ENCODE measurements at regions of chr6 and their contacts with region 1.

Region 1: DNA sequence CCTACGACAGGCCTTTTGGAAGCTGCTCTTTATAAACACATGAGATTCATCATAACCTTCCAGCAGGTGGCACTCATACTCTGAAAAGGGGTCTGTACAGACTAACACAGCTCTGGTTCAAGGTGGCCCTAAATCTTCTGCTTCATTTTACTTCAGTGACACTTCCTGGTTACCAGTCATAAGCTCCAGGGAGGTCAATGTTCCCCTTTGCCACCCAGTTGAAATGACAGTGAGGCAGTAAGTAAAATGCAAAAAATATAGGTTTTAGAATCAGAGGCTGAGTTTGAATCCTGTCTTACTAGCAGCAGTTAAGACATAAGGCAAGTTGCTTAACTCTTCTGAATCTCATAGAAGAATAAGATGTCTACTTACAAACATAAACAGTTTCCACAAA is 132.8 kb downstream of the CDK19 start:
- DNase-seq: peak in 32 of 35 experiments; percentile 21 to 88 (median 60)
- ATAC-seq: peak; percentile 91 to 100 (median 98)
- H3K4me3 ChIP-seq: no peak overlapping the region
- H3K4me3 Mint-ChIP-seq: no peak overlapping the region
- H3K27ac ChIP-seq: no peak overlapping the region
- H3K27ac Mint-ChIP-seq: no peak overlapping the region
- H3K4me1 ChIP-seq: peaks cover 5 to 8% of the 10 kb centered on the region in 2 experiments
- H3K4me1 Mint-ChIP-seq: peaks cover 12 to 22% (median 13%) of the 10 kb centered on the region in 3 donors
- H3K27me3 ChIP-seq: no peaks in the 10 kb centered on the region
- H3K27me3 Mint-ChIP-seq: no peaks in the 10 kb centered on the region

Region 2: GRCh38 chr6:110595112-110595511 is 87.3 kb before region 1 on chr6:
- CTCF ChIA-PET with region 1: no interaction called
- POLR2A ChIA-PET with region 1: no interaction called
- DNase-seq: no peak
- ATAC-seq: no peak
- H3K4me3 ChIP-seq: no peak overlapping the region
- H3K4me3 Mint-ChIP-seq: no peak overlapping the region
- H3K27ac ChIP-seq: no peak overlapping the region
- H3K27ac Mint-ChIP-seq: no peak overlapping the region
- H3K4me1 ChIP-seq: no peaks in the 10 kb centered on the region
- H3K4me1 Mint-ChIP-seq: peaks cover 0 to 4% (median 0%) of the 10 kb centered on the region in 3 donors
- H3K27me3 ChIP-seq: no peaks in the 10 kb centered on the region
- H3K27me3 Mint-ChIP-seq: no peaks in the 10 kb centered on the region

Region 3: GRCh38 chr6:110654096-110654820 is 28.2 kb before region 1 on chr6:
- CTCF ChIA-PET with region 1: no interaction called
- POLR2A ChIA-PET with region 1: no interaction called
- DNase-seq: no peak
- ATAC-seq: no peak
- H3K4me3 ChIP-seq: no peak overlapping the region
- H3K4me3 Mint-ChIP-seq: no peak overlapping the region
- H3K27ac ChIP-seq: no peak overlapping the region
- H3K27ac Mint-ChIP-seq: no peak overlapping the region
- H3K4me1 ChIP-seq: no peaks in the 10 kb centered on the region
- H3K4me1 Mint-ChIP-seq: peaks cover 3 to 10% (median 8%) of the 10 kb centered on the region in 3 donors
- H3K27me3 ChIP-seq: no peaks in the 10 kb centered on the region
- H3K27me3 Mint-ChIP-seq: no peaks in the 10 kb centered on the region

Region 4: GRCh38 chr6:110799189-110799588 is 116.7 kb after region 1 on chr6:
- CTCF ChIA-PET with region 1: no interaction called
- POLR2A ChIA-PET with region 1: no interaction called
- DNase-seq: no peak
- ATAC-seq: no peak
- H3K4me3 ChIP-seq: no peak overlapping the region
- H3K4me3 Mint-ChIP-seq: no peak overlapping the region
- H3K27ac ChIP-seq: no peak overlapping the region
- H3K27ac Mint-ChIP-seq: no peak overlapping the region
- H3K4me1 ChIP-seq: peaks cover 0 to 3% of the 10 kb centered on the region in 2 experiments
- H3K4me1 Mint-ChIP-seq: peaks cover 19 to 28% (median 25%) of the 10 kb centered on the region in 3 donors
- H3K27me3 ChIP-seq: no peaks in the 10 kb centered on the region
- H3K27me3 Mint-ChIP-seq: no peaks in the 10 kb centered on the region

Region 5: DNA sequence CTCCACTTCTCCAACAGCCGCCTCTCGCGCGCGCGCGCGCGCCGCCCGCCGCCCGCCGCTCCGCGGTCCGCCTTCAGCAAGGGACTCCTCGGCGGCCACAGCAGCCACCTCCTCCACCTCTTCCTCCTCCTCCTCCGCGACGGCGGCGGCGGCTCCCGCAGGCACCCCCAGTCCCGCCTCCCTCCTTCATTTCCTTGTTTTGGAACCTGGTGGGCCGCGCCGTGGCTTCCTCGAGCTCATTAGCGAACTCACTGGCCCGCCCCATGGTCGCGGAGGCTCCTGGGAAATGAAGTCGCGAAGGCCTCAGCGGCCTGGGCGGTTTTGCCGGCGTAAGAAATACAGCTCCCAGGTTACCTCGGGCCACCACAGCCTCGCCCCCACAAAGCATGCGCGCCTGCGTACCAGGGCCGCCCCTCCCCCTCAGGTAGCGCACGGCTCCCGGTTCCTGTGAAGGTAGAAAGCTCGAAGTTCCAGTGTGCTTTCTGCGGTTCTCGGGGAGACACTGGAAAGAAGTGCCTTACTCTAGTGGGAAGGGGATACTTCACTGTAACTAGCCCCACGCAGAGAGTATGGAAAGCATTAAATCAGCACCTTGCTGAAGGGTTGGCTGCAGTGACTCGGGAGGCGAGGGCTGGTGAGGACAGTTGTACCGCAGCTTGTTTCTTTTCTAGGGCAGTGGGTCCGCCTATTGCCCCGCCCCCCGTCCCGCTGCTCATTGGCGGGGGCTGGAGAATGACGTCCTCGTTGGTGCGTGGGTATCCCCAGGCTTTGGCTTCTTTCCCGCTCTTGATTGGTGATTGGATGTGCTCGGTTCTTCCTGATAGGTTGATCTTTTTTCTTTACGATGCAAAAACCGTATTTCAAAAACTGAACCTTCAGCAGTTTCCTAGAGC is 133.0 kb after region 1 on chr6 and contains the start of gene CDK19:
- CTCF ChIA-PET with region 1: interaction called, 5 to 10 read pairs
- POLR2A ChIA-PET with region 1: no interaction called
- DNase-seq: peak; percentile 96 to 99 (median 98)
- ATAC-seq: peak; percentile 84 to 88 (median 84)
- H3K4me3 ChIP-seq: peak within 1 kb of the TSS; percentile 75 to 94
- H3K4me3 Mint-ChIP-seq: peak within 1 kb of the TSS; percentile 94 to 99 (median 99)
- H3K27ac ChIP-seq: peak within 1 kb of the TSS; percentile 81
- H3K27ac Mint-ChIP-seq: peak within 1 kb of the TSS; percentile 97 to 99
- H3K4me1 ChIP-seq: peaks cover 11 to 15% of the 10 kb centered on the region in 2 experiments
- H3K4me1 Mint-ChIP-seq: peaks cover 20 to 33% (median 32%) of the 10 kb centered on the region in 3 donors
- H3K27me3 ChIP-seq: no peaks in the 10 kb centered on the region
- H3K27me3 Mint-ChIP-seq: no peaks in the 10 kb centered on the region
- total RNA-seq, gene CDK19: 11.4 to 16.1 (median 14.2) TPM

Region 6: DNA sequence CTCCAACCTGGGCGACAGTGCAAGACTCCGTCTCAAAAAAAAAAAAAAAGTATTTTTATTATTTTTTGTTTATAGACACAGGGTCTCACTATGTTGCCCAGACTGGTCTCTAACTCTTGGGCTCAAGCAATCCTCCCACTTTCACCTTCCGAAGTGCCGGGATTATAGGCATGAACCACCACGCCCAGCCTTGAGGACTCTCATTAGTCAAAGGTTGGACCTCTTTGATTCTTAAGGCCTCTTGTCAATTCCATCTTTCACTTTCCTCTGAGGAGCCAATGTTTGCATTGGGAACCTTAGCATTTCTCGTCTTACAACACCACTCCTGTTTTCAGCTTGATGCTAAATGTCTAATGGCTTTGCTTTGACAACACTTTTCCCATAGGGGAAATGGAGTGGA is 148.9 kb after region 1 on chr6:
- CTCF ChIA-PET with region 1: no interaction called
- POLR2A ChIA-PET with region 1: no interaction called
- DNase-seq: no peak
- ATAC-seq: no peak
- H3K4me3 ChIP-seq: no peak overlapping the region
- H3K4me3 Mint-ChIP-seq: no peak overlapping the region
- H3K27ac ChIP-seq: no peak overlapping the region
- H3K27ac Mint-ChIP-seq: no peak overlapping the region
- H3K4me1 ChIP-seq: no peaks in the 10 kb centered on the region
- H3K4me1 Mint-ChIP-seq: no peaks in the 10 kb centered on the region
- H3K27me3 ChIP-seq: no peaks in the 10 kb centered on the region
- H3K27me3 Mint-ChIP-seq: no peaks in the 10 kb centered on the region

Region 7: GRCh38 chr6:110873981-110874879 is 191.8 kb after region 1 on chr6 and contains the start of gene AMD1:
- CTCF ChIA-PET with region 1: interaction called, 10 to 63 read pairs
- POLR2A ChIA-PET with region 1: interaction called, 6 to 26 read pairs
- DNase-seq: peak; percentile 79 to 98 (median 95)
- ATAC-seq: peak; percentile 78 to 80 (median 78)
- H3K4me3 ChIP-seq: peak within 1 kb of the TSS; percentile 91 to 97
- H3K4me3 Mint-ChIP-seq: peak within 1 kb of the TSS; percentile 97 to 99 (median 98)
- H3K27ac ChIP-seq: peak within 1 kb of the TSS; percentile 89
- H3K27ac Mint-ChIP-seq: peak within 1 kb of the TSS; percentile 98
- H3K4me1 ChIP-seq: peaks cover 20 to 28% of the 10 kb centered on the region in 2 experiments
- H3K4me1 Mint-ChIP-seq: peaks cover 28 to 40% (median 32%) of the 10 kb centered on the region in 3 donors
- H3K27me3 ChIP-seq: no peaks in the 10 kb centered on the region
- H3K27me3 Mint-ChIP-seq: no peaks in the 10 kb centered on the region
- total RNA-seq, gene AMD1: 54.8 to 117 (median 57.6) TPM

Region 8: DNA sequence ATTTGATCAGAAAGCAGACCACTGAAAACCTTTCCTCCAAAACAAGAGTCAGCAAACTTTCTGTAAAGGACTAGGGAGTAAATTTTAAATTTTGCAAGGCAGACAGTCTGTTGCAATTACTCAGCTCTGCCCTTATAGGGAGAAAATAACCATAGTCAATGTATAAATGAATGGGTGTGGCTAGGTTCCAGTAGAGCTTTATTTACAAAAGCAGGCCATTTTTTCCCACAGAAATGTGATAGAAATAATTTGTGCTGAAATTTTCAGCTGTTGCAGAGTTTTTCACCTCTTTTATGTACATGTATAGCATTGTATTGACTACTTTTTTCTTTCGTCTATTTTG is 199.8 kb after region 1 on chr6:
- CTCF ChIA-PET with region 1: interaction called, 10 to 63 read pairs
- POLR2A ChIA-PET with region 1: interaction called, 4 to 20 read pairs
- DNase-seq: no peak
- ATAC-seq: no peak
- H3K4me3 ChIP-seq: no peak overlapping the region
- H3K4me3 Mint-ChIP-seq: peak overlapping the region in 2 of 3 donors; percentile 24 to 98
- H3K27ac ChIP-seq: no peak overlapping the region
- H3K27ac Mint-ChIP-seq: peak overlapping the region; percentile 8 to 12
- H3K4me1 ChIP-seq: peaks cover 54 to 68% of the 10 kb centered on the region in 2 experiments
- H3K4me1 Mint-ChIP-seq: peaks cover 95 to 97% (median 96%) of the 10 kb centered on the region in 3 donors
- H3K27me3 ChIP-seq: no peaks in the 10 kb centered on the region
- H3K27me3 Mint-ChIP-seq: no peaks in the 10 kb centered on the region

Region 9: DNA sequence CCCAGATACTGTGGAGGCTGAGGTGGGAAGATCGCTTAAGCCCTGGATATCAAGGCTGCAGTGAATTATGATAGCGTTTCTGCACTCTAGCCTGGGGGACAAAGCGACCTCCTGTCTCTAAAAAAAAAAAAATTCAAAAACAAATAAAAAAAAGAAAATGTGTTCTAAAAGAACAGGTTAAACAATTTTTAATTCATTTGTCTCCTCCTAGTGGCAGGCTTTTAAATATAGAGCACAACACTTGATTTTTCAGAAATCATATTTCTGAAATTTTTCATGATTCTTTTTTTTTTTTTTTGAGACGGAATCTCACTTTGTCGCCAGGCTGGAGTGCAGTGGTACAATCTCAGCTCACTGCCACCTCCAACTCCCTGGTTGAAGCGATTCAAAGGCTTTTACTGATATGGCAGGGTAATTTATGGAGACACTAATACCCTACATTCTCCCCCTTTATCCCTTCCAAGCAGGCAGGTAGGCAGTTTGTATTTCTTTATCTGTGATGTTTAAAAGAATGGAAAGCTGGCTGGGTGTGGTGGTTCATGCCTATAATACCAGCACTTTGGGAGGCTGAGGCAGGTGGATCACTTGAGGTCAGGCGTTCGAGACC is 267.3 kb after region 1 on chr6:
- CTCF ChIA-PET with region 1: interaction called, 31 to 39 read pairs
- POLR2A ChIA-PET with region 1: interaction called in 1 of 2 experiments, 6 read pairs
- DNase-seq: peak in 1 of 35 experiments; percentile 60
- ATAC-seq: peak in 1 of 4 experiments; percentile 42
- H3K4me3 ChIP-seq: no peak overlapping the region
- H3K4me3 Mint-ChIP-seq: no peak overlapping the region
- H3K27ac ChIP-seq: no peak overlapping the region
- H3K27ac Mint-ChIP-seq: no peak overlapping the region
- H3K4me1 ChIP-seq: no peaks in the 10 kb centered on the region
- H3K4me1 Mint-ChIP-seq: peaks cover 0 to 6% (median 5%) of the 10 kb centered on the region in 3 donors
- H3K27me3 ChIP-seq: no peaks in the 10 kb centered on the region
- H3K27me3 Mint-ChIP-seq: no peaks in the 10 kb centered on the region

Region 10: GRCh38 chr6:110958329-110959192 is 276.1 kb after region 1 on chr6 and contains the start of gene GTF3C6:
- CTCF ChIA-PET with region 1: interaction called, 6 to 21 read pairs
- POLR2A ChIA-PET with region 1: interaction called in 1 of 2 experiments, 4 read pairs
- DNase-seq: peak; percentile 78 to 96 (median 91)
- ATAC-seq: peak; percentile 99 to 100 (median 99)
- H3K4me3 ChIP-seq: peak within 1 kb of the TSS; percentile 88 to 98
- H3K4me3 Mint-ChIP-seq: peak within 1 kb of the TSS; percentile 90 to 97 (median 95)
- H3K27ac ChIP-seq: peak within 1 kb of the TSS; percentile 94
- H3K27ac Mint-ChIP-seq: peak within 1 kb of the TSS; percentile 92 to 99
- H3K4me1 ChIP-seq: peaks cover 7 to 16% of the 10 kb centered on the region in 2 experiments
- H3K4me1 Mint-ChIP-seq: peaks cover 14 to 22% (median 18%) of the 10 kb centered on the region in 3 donors
- H3K27me3 ChIP-seq: no peaks in the 10 kb centered on the region
- H3K27me3 Mint-ChIP-seq: no peaks in the 10 kb centered on the region
- total RNA-seq, gene GTF3C6: 21.4 to 33.9 (median 30.3) TPM

Region 11: DNA sequence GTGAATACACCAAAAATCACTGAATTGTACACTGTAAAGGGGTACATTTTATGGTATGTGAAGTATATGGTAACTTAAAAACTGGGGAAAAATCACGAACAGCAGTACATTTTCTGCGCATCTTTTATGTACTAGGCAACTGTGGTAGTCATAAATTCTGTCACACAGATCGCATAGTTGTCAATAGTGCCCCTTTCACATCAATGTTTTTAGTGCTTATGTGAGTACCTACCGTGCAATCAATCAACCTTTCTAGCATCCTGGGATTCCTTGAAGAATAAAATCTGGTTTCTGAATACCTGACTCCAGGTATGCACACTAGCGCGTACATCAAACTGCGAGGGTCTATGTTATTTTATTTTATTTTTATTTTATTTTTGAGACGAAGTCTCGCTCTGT is 298.7 kb after region 1 on chr6:
- CTCF ChIA-PET with region 1: interaction called in 1 of 2 experiments, 13 read pairs
- POLR2A ChIA-PET with region 1: no interaction called
- DNase-seq: peak in 1 of 35 experiments; percentile 45
- ATAC-seq: no peak
- H3K4me3 ChIP-seq: peak overlapping the region; percentile 94 to 98
- H3K4me3 Mint-ChIP-seq: peak overlapping the region; percentile 95 to 99 (median 96)
- H3K27ac ChIP-seq: peak overlapping the region; percentile 84
- H3K27ac Mint-ChIP-seq: peak overlapping the region; percentile 92 to 99
- H3K4me1 ChIP-seq: peaks cover 7 to 18% of the 10 kb centered on the region in 2 experiments
- H3K4me1 Mint-ChIP-seq: peaks cover 39 to 47% (median 42%) of the 10 kb centered on the region in 3 donors
- H3K27me3 ChIP-seq: no peaks in the 10 kb centered on the region
- H3K27me3 Mint-ChIP-seq: no peaks in the 10 kb centered on the region